Right ventricle myocardium inferior (tissue), 1 donor: ENCODE measurements at regions of chr14 and their contacts with region 1.

Region 1: DNA sequence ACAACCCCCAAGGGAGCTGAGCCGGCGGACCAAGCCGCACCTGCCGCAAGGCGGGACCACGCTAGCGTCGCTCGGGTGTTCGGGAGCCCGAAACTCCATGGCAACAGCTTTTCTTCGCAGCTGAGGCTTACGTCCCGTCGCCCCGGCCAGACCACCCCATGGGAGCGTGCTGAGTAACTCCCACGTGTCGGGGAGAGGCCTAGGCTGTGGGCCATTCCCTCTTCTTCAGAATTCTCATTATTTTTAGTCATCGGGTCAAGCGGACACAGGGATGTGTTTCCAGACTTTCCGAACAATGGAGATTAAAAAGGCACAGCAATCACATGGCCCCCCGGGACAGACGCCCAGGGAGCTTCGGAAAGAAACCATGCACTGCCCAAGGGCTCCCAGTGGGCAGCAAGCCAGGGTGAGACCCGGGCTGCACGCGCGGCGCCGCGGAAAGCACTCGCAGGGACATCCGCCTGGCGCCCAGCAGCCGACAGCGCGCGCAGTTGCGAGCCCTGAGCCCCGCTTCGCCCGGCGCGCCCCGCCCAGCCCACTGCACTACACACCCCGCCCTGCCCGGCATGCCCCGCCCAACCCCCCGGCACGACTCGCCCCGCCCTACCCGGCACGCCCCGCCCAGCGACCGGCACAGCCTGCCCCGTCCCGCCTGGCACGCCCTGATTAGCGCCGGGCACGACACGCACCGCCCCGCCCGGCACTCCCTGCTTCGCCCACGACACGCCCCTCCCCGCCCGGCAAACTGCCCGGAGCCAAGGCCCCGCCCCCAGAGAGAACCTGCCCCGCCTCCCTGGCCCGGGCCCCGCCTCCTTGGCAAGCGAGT is 422 bp upstream of the AK7 start:
- DNase-seq: peak; percentile 99
- ATAC-seq: peak; percentile 99

Region 2: DNA sequence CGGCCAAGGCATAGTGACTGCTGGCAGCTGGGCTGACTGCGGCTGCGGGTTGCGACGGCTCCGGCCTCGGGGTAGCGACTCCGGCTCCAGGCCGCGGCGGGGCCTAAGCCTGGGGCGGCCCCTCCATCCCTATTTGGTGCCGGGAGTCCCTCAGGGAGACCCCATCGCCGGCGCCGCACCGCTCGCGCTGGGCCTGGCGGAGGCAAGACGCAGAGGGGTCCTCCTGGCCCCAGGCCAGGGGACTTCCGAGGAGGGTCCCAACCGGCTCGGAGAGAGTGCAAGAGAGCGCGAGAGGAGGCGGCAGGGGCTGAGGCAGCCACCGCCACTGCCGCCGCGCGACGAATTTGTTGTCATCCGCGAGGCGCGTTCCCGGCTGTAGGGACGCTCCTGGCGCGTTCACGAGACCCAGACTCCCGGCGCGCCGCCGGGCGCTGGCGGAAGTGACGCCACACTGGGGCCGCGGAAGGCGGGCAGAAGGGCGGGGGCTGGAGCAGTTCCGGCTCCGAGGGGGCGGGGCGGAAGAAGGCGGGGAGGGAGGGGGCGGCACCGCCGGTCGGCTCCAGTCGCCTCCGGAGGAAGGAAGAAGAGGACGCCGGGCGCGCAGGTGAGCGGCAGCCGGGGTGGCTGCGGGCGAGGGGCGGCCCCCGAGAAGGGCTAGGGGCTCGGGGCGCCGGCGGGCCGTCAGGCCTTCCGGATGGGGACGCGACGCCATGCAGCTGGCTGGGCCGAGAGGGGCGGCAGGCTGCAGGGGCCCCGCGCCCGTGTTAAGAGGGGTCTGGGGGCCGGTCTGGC is 28.3 kb before region 1 on chr14 and contains the starts of genes ATG2B and GSKIP:
- intact Hi-C with region 1: loop called (anchors 2 kb)
- DNase-seq: peak; percentile 97
- ATAC-seq: peak; percentile 99
- total RNA-seq, gene ATG2B: 9.2 TPM
- total RNA-seq, gene GSKIP: 11.6 TPM

Region 3: DNA sequence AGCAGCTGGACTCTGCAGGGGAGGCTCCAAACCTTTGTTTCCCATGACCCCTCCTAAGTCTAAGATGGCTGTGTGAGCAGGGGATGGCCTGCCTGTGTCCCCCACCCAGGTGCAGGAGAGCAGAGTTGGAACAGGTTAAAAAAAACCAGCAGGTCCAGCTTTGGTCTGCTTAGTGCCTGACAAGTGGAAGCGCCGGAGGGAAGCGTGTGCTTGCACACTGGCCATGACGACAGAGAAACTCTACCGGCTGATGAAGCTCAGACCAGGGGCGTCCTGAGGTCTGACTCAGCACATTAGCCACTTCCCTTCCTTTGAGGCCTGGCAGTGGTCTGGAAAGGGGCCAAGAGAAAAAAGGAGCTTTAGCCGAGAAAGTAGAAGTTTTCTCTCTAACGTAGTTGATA is 685.7 kb after region 1 on chr14:
- intact Hi-C with region 1: no loop called
- DNase-seq: no peak
- ATAC-seq: peak; percentile 72